Activated CD4-positive, alpha-beta T cell treated with anti-CD3 and anti-CD28 coated beads for 36 hours (primary cell): ENCODE measurements at regions of chr14 and their contacts with region 1.

Region 1: GRCh38 chr14:52650774-52651173 is 44.6 kb downstream of the ERO1A start:
- DNase-seq: no peak
- ATAC-seq: no peak
- H3K4me3 Mint-ChIP-seq: no peak overlapping the region
- H3K27ac Mint-ChIP-seq: no peak overlapping the region
- H3K4me1 Mint-ChIP-seq: no peaks in the 10 kb centered on the region
- H3K27me3 Mint-ChIP-seq: no peaks in the 10 kb centered on the region

Region 2: DNA sequence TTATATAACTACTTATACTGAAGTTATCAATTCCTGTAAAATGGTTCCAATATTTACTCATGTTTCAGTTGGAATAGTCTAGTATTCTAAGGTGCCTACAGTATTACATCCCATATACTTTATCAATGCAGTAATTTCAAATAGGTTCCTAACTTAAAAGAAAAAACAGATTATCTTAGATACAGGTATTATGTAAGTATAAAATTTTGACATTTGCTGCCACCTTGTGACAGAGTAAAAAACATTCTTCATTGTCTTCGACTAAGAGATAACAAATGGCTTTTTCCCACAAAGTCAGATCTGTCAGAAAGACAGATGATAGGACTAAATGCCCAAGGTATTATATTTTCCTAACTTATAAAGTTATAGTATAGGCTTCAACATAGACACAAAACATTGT is 177.2 kb before region 1 on chr14:
- CTCF ChIA-PET with region 1: no interaction called
- POLR2A ChIA-PET with region 1: no interaction called
- intact Hi-C with region 1: no loop called
- DNase-seq: no peak
- ATAC-seq: peak; percentile 26
- H3K4me3 Mint-ChIP-seq: no peak overlapping the region
- H3K27ac Mint-ChIP-seq: no peak overlapping the region
- H3K4me1 Mint-ChIP-seq: peaks cover 3% of the 10 kb centered on the region
- H3K27me3 Mint-ChIP-seq: no peaks in the 10 kb centered on the region

Region 3: DNA sequence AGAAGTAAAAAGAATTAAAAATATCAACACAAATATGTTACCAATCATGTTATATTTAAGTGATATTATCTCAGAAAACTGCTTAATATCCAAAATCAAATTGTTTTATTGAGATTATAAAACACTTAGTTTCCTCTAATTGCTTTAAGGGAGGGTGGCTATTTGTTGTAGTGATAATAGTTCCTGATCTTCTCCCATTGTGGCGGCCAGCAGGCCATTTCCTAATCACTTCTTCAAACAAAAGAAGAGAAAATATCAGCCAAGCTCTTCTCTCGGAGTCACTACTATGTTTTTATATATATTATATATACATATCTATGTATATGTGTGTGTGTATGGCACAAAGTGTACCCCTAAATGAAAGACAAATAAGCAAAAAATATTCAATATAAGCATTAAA is 13.1 kb after region 1 on chr14:
- CTCF ChIA-PET with region 1: no interaction called
- POLR2A ChIA-PET with region 1: no interaction called
- intact Hi-C with region 1: loop called in 1 of 2 experiments (anchors 2 kb)
- DNase-seq: no peak
- ATAC-seq: no peak
- H3K4me3 Mint-ChIP-seq: no peak overlapping the region
- H3K27ac Mint-ChIP-seq: no peak overlapping the region
- H3K4me1 Mint-ChIP-seq: peaks cover 6% of the 10 kb centered on the region
- H3K27me3 Mint-ChIP-seq: no peaks in the 10 kb centered on the region

Region 4: DNA sequence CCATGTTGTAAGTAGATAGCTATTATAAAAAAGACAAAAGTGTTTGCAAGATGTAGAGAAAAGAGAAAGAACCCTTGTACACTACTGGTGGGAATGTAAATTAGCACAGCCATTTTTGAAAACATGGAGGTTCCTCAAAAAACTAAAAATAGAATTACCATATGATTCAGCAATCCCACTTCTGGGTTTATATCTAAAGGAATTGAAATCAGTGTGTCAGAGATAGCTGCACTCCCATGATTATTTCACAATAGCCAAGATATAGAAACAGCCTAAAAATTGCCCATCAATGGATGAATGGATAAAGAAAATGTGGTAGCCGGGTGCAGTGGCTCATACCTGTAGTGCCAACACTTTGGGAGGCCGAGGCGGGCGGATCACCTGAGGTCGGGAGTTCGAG is 65.4 kb after region 1 on chr14:
- CTCF ChIA-PET with region 1: interaction called, 4 read pairs
- POLR2A ChIA-PET with region 1: no interaction called
- intact Hi-C with region 1: loop called in 1 of 2 experiments (anchors 5 kb)
- DNase-seq: no peak
- ATAC-seq: no peak
- H3K4me3 Mint-ChIP-seq: no peak overlapping the region
- H3K27ac Mint-ChIP-seq: no peak overlapping the region
- H3K4me1 Mint-ChIP-seq: peaks cover 7% of the 10 kb centered on the region
- H3K27me3 Mint-ChIP-seq: no peaks in the 10 kb centered on the region

Region 5: GRCh38 chr14:53011053-53011462 is 360.3 kb after region 1 on chr14:
- CTCF ChIA-PET with region 1: no interaction called
- POLR2A ChIA-PET with region 1: no interaction called
- intact Hi-C with region 1: no loop called
- DNase-seq: no peak
- ATAC-seq: no peak
- H3K4me3 Mint-ChIP-seq: no peak overlapping the region
- H3K27ac Mint-ChIP-seq: no peak overlapping the region
- H3K4me1 Mint-ChIP-seq: no peaks in the 10 kb centered on the region
- H3K27me3 Mint-ChIP-seq: peaks cover 8% of the 10 kb centered on the region